ENCODE measurements at regions of chr6 and their contacts with region 1.

Region 1: GRCh38 chr6:100116411-100117194 is 122.6 kb upstream of the MCHR2 start:
- ATAC-seq: peak; percentile 45 to 88 (median 74)
- H3K4me3 ChIP-seq: no peak overlapping the region
- H3K27ac ChIP-seq: no peak overlapping the region
- H3K4me1 ChIP-seq: peaks cover 0 to 4% of the 10 kb centered on the region in 2 donors

Region 2: GRCh38 chr6:100479179-100480035 is 362.8 kb after region 1 on chr6:
- in situ Hi-C with region 1: loop called (anchors 10 to 25 kb)
- ATAC-seq: peak in 5 of 8 experiments; percentile 38 to 75 (median 66)
- H3K4me3 ChIP-seq: no peak overlapping the region
- H3K27ac ChIP-seq: no peak overlapping the region
- H3K4me1 ChIP-seq: no peaks in the 10 kb centered on the region

Region 3: GRCh38 chr6:100664274-100665040 is 547.9 kb after region 1 on chr6:
- in situ Hi-C with region 1: loop called in 7 of 9 experiments (anchors 10 to 25 kb)
- ATAC-seq: peak in 1 of 8 experiments; percentile 22
- H3K4me3 ChIP-seq: no peak overlapping the region
- H3K27ac ChIP-seq: no peak overlapping the region
- H3K4me1 ChIP-seq: no peaks in the 10 kb centered on the region